Dorsolateral prefrontal cortex (tissue), 120 donors: ENCODE measurements at regions of chr17 and their contacts with region 1.

Region 1: GRCh38 chr17:20009302-20010098 is at the start of gene SPECC1:
- DNase-seq: peak in 8 of 10 donors; percentile 69 to 93 (median 82)
- H3K4me3 ChIP-seq: peak within 1 kb of the TSS; percentile 65 to 99 (median 88)
- H3K27ac ChIP-seq: peak within 1 kb of the TSS; percentile 74 to 98 (median 95)
- H3K27me3 ChIP-seq: no peaks in the 10 kb centered on the region
- CTCF ChIP-seq: peak in 48 of 56 donors; percentile 3 to 100 (median 96)
- total RNA-seq, gene SPECC1: 140 to 321 (median 197) TPM

Region 2: DNA sequence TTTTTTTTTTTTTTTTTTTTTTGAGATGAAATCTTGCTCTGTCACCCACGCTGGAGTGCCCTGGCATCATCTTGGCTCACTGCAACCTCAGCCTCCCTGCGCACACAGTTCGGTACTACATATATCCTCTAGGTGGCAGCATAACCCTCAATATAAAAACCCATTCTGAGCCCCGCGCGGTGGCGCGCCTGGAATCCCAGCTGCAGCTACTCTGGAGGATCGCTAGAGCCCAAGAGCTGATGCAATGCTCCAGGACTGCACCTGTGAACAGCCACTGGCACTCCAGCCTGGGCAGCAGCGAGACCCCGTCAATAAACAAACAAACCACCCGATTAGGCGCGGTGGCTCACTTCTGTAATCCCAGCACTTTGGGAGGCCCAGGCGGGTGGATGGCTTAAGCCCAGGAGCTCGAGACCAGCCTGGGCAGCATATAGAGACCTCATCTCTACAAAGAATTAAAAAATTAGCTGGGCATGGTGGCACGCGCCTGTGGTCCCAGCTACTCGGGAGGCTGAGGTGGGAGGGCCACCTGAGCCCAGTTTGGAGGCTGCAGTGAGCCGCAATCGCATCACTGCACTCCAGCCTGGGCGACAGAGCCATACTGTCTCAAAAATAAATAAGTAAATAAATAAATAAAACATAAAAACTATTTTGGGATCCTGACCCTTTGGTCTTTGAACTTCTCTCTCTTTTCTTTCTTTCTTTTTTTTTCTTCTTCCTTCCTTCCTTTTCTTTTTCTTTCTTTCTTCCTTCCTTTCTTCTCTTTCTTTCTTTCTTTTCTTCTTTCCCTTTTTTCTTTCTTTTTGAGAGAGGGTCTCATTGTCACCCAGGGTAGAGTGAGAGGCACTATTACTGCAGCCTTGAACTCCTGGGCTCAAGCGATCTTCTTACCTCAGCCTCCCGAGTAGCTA is 16.4 kb before region 1 on chr17:
- intact Hi-C with region 1: loop called in 1 of 2 experiments (anchors 2 kb)
- DNase-seq: peak; percentile 83 to 94 (median 90)
- H3K4me3 ChIP-seq: peak overlapping the region in 58 of 59 donors; percentile 23 to 65 (median 47)
- H3K27ac ChIP-seq: peak overlapping the region in 51 of 59 donors; percentile 2 to 86 (median 74)
- H3K27me3 ChIP-seq: no peaks in the 10 kb centered on the region
- CTCF ChIP-seq: peak; percentile 79 to 97 (median 91)

Region 3: DNA sequence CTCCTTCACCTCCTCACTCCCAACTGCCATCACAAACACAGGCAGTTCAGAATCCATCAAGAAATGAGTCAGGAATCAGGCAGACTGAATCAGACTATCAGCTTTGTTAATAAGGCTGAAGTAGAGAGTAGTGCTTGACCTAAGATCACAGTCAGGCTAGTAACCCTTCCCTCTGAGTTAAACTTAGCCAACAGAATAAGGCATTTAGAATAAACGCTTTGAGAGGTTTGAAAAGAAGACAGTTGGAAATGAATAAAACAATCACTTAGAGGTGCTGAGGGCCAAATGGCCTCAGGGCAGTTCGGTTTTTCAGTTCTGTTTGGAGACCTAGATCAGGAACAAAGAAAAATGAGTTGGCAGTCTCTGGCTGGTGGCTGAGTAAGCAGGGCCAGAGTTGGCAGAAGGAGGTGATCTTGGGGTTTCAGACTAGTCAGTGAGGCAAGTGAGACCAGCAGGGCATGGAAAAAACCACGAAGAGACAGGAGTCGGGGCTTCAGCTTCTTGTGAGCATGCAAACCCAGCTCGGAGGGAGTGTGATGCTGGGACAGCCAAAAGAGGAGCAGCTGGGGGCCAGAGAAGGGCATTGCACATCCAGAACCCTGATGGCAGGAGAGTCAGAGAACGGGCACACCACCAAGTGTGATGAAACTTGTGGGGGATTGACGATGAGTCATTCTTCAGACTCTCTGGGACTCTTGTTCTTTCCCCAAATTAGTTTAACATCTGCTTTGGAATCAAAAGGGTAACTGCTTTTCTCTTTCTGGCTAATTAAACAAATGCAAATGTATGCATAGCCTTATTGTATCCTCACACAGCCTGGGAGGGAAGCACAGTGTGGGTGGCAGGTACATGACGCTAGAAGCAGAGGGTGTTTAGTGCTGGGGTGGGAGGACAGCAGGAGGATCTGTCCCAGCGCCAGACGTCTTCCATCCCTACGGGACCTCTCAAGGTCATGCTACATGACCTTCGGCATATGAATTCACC is 54.5 kb after region 1 on chr17:
- intact Hi-C with region 1: loop called in 1 of 2 experiments (anchors 10 kb)
- DNase-seq: peak in 9 of 10 donors; percentile 43 to 89 (median 70)
- H3K4me3 ChIP-seq: peak overlapping the region in 31 of 59 donors; percentile 1 to 44 (median 22)
- H3K27ac ChIP-seq: peak overlapping the region; percentile 39 to 92 (median 82)
- H3K27me3 ChIP-seq: no peaks in the 10 kb centered on the region
- CTCF ChIP-seq: peak in 2 of 56 donors; percentile 6 to 17

Region 4: DNA sequence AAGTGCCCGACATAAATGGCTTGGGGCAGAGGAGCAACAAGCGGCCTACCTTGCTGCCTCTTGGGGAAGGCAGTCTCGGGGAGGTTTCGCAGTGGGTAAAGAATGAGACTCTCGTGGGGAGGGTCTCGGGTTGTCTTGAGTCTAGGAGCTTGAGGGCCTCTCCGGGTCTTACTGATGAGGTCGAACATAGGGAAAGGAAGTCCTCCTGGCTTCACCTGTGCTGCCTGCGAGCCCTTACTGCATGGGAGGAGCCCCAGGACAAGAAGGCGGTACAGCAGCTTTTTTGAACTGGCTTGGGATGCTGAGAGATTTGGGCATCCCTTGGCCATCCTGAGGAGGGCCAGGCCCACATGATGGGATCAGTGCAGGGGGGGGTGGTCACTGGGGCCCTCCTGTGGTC is 71.0 kb after region 1 on chr17:
- intact Hi-C with region 1: no loop called
- DNase-seq: no peak
- H3K4me3 ChIP-seq: no peak overlapping the region
- H3K27ac ChIP-seq: peak overlapping the region in 8 of 59 donors; percentile 22 to 51 (median 38)
- H3K27me3 ChIP-seq: no peaks in the 10 kb centered on the region
- CTCF ChIP-seq: no peak

Region 5: DNA sequence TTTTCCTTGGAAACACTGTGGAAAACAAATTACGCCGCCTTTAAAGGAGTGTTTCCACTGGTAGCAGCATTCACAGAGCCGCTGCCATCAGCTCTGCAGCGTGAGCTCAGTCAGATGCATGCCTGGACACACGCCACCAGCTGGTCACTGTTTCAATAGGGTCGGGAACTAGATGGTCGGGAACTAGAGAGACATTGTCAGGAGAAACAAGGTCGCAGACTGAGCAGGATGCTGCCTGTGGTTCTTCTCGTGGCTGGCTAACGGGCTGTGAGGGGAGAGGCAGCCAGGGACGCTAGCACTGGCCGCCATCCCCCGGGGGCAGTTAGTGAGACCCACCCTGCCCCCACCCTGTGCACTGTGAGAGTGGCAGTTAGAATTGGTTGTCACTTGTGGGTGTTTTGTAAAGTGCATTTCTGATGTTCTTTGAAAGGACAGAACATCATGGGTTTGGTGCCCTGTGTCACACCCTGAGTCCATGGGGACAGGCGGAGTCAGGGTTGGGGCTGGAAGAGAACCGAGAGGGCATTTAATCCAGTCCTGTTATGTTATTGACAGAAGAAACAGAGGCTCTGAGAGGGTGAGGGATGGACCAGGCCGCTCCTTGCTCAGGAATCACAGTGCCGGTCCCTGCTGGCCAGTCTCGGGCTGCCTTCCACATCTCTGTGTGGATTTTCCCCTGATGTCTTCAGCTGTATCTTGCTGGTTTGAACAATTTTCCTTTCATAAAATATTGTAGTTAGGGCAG is 86.0 kb after region 1 on chr17:
- intact Hi-C with region 1: loop called (anchors 1 to 5 kb)
- DNase-seq: peak; percentile 70 to 91 (median 86)
- H3K4me3 ChIP-seq: peak overlapping the region in 55 of 59 donors; percentile 1 to 62 (median 37)
- H3K27ac ChIP-seq: peak overlapping the region; percentile 68 to 96 (median 89)
- H3K27me3 ChIP-seq: no peaks in the 10 kb centered on the region
- CTCF ChIP-seq: peak in 54 of 56 donors; percentile 23 to 70 (median 51)